ENCODE measurements at regions of chr14 and their contacts with region 1.

Region 1: DNA sequence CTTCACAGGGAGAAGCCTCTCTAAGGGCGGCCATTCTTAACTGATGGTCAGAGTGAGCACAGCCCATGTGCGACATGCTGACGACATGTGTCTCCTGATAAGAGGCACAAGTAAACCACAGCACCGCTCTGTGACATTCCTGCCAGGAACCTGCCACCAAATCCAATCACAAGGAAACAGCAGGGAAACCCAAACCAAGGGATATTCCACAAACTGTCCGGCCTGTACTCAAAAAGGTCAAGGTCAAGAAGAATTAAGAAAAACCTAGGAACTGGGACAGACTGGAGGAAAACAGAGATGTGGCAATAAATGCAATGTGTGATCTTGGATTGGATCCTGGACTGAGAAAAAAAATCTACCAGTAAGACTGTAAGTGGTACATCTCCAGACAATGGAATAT is 91.9 kb downstream of the SYNE3 start:
- DNase-seq: no peak
- ATAC-seq: peak; percentile 68 to 85
- H3K4me3 ChIP-seq: no peak overlapping the region
- H3K27ac ChIP-seq: no peak overlapping the region
- H3K4me1 ChIP-seq: no peaks in the 10 kb centered on the region
- H3K27me3 ChIP-seq: no peaks in the 10 kb centered on the region
- CTCF ChIP-seq: no peak
- POLR2A ChIP-seq: no peak

Region 2: DNA sequence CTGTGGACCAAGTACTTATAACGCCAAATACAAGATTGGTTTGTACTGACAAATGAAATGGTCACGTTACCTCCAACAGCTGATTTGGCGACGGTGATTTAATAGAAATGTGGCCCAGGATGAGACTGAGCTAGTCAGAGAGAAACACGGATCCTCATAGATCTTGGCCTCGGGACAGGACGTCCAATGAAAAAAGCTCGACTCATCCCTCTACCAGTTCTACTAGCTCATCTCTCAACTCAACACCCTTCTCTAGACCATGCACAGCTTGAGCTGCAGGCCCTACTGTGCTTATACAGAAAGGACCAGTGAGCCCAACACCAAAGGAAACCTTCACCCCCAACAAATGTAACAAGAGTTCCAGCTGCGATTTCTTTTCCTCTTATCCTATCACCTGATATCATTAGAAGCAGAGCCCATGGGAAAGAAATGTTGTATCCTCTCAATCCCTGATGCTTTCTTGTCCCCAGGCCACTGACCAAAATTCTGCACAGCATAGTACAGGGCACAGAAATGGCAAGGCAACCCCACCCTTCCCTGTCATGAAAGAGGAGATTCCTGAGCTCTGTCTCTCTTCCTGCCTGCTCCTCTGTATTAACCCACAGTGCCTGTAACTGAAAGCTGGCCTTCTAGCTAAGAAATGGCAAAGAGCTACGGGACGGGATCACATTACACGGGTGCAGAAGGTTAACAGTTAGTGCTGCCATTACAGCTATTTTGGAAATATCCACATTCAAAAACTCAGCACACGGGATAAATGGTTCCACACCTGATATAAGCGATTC is 306.4 kb before region 1 on chr14:
- in situ Hi-C with region 1: no loop called
- intact Hi-C with region 1: loop called (anchors 10 kb)
- DNase-seq: no peak
- ATAC-seq: peak in 1 of 2 donors; percentile 74
- H3K4me3 ChIP-seq: no peak overlapping the region
- H3K27ac ChIP-seq: peak overlapping the region; percentile 5 to 52 (median 13)
- H3K4me1 ChIP-seq: peaks cover 30% of the 10 kb centered on the region in 2 donors
- H3K27me3 ChIP-seq: no peaks in the 10 kb centered on the region
- CTCF ChIP-seq: no peak
- POLR2A ChIP-seq: no peak

Region 3: GRCh38 chr14:96275177-96276112 is 850.9 kb after region 1 on chr14:
- in situ Hi-C with region 1: no loop called
- intact Hi-C with region 1: loop called (anchors 5 kb)
- DNase-seq: peak; percentile 20 to 24
- ATAC-seq: peak in 1 of 2 donors; percentile 32
- H3K4me3 ChIP-seq: no peak overlapping the region
- H3K27ac ChIP-seq: no peak overlapping the region
- H3K4me1 ChIP-seq: no peaks in the 10 kb centered on the region
- H3K27me3 ChIP-seq: no peaks in the 10 kb centered on the region
- CTCF ChIP-seq: peak; percentile 69 to 86 (median 83)
- POLR2A ChIP-seq: no peak

Measured in gastrocnemius medialis (tissue), 4 donors.